Panc1 (cell line): ENCODE measurements at regions of chr15 and their contacts with region 1.

Region 1: DNA sequence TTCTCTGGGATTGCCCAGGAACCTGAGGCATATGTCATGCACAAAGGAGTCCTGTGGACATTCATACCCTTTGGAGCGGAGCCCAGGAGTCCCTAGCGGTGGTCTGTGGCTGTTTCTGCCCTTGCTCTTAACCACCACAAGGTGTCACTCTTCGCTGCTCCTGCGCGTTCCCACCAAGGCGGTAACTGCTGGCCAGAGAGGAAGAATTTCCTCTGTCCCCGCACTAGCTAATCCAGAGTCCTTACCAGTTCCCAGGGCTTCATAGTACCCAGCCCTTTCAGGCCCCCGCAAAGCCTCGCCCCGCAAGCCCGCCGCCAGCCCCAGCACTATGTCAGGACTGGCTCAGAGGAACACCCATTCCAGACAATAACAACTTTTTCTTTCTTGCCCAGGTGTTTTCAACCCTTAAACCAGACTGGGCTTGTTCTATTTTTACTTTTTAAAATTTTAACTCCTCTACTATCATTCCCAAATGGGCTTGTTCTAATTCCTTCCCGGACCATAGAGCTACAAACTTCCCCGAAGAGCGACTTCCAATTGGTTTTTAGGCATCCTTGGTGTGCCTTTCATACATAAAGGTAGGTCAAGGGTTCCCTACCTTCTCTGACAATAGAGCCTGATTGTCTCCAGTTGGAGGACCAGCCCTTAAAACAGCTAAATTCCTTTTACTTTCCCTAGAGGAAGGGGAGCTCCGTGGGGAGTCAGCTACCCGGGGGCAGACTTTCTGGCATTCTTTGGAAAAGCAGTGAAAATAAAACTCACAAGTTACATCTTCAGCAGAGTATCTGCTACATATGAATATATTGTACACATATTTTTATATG is 31.8 kb upstream of the ZNF774 start:
- DNase-seq: peak; percentile 86
- ATAC-seq: peak; percentile 99
- H3K4me3 ChIP-seq: peak overlapping the region; percentile 10 to 36; a peak in 3 of 4 replicates
- H3K27ac ChIP-seq: peak overlapping the region; percentile 79
- H3K4me1 ChIP-seq: peaks cover 14% of the 10 kb centered on the region
- H3K27me3 ChIP-seq: no peaks in the 10 kb centered on the region
- CTCF ChIP-seq: peak; percentile 97

Region 2: DNA sequence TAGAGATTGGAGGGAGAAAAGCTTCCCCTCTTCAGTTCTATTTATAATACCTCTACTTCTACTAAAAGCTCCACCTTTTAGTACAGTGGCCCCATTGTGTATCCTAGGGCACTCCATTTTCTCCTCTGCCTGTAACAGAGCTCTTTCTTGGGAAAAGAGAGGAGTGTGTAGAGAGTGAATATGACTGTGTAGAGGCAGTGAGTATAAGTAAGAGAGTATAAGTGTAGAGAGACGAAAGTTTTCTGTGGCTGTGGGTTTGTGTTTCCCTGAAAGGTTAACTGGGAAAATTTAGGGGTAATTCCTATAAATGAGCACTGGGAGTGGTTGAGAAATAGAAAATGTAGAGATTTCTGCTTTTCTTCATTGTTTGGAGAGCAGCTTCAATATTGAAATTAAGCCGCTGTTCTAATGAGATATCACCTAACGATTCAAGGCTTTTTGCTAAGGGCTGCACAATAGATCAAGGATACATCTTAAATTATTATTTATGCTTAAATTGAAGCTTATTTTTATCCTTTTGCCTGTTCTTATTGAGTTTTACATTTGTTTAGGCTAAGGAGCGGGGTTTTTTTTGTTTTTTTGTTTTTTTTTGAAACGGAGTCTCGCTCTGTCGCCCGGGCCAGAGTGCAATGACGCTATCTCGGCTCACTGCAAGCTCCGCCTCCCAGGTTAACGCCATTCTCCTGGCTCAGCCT is 74.6 kb after region 1 on chr15:
- CTCF ChIA-PET with region 1: interaction called, 3 read pairs
- POLR2A ChIA-PET with region 1: interaction called, 3 read pairs
- in situ Hi-C with region 1: no loop called
- intact Hi-C with region 1: loop called (anchors 10 kb)
- DNase-seq: no peak
- ATAC-seq: peak; percentile 59
- H3K4me3 ChIP-seq: no peak overlapping the region
- H3K27ac ChIP-seq: peak overlapping the region; percentile 83
- H3K4me1 ChIP-seq: peaks cover 69% of the 10 kb centered on the region
- H3K27me3 ChIP-seq: no peaks in the 10 kb centered on the region
- CTCF ChIP-seq: no peak

Region 3: DNA sequence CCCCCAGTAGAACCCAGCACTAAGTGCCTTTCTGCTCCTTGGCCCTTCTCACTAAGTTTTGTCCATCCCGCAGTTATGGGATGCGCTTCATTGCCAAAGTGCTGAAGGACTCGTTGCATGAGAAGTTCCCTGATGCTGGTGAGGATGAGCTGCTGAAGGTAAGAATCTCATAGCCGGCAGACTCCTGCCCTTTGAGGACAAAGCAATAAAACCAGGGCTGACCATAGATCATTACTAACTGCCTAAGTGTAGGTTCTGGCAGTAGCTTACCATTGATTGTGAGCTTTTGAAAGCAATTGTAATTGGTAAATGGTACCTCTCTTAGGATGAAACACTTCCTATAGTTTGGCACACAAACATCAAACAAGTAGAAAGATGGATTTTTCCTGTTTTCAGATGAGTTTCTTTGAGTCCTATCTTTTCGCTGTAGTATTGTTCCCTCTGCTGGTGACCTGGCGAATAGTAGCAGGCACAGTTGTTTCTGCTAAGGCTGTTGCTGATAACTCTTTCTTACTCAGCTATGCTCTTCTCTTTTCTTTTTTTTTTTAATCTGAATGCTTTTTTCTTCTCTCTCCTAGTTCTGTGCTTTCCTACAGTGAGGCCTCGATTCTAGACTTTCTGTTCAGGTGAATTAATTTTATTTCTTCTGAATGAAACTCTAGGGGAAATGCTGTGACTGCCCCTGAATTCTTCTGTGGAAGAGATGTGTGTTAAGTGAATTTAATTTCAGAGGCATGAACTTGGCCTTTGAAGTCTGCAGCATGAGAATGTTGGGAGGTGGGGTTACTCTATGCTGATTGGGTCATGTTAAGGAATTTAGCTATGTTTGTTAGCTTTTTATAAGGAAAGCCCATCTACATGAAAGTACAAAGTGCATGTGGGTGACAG is 162.1 kb after region 1 on chr15:
- CTCF ChIA-PET with region 1: interaction called, 26 read pairs
- POLR2A ChIA-PET with region 1: no interaction called
- in situ Hi-C with region 1: no loop called
- intact Hi-C with region 1: loop called (anchors 1 kb)
- DNase-seq: peak; percentile 18
- ATAC-seq: peak; percentile 62; the same call in 1 of the 2 replicates
- H3K4me3 ChIP-seq: no peak overlapping the region
- H3K27ac ChIP-seq: no peak overlapping the region
- H3K4me1 ChIP-seq: peaks cover 9% of the 10 kb centered on the region; the same call in 1 of the 2 replicates
- H3K27me3 ChIP-seq: no peaks in the 10 kb centered on the region
- CTCF ChIP-seq: peak; percentile 77

Region 4: DNA sequence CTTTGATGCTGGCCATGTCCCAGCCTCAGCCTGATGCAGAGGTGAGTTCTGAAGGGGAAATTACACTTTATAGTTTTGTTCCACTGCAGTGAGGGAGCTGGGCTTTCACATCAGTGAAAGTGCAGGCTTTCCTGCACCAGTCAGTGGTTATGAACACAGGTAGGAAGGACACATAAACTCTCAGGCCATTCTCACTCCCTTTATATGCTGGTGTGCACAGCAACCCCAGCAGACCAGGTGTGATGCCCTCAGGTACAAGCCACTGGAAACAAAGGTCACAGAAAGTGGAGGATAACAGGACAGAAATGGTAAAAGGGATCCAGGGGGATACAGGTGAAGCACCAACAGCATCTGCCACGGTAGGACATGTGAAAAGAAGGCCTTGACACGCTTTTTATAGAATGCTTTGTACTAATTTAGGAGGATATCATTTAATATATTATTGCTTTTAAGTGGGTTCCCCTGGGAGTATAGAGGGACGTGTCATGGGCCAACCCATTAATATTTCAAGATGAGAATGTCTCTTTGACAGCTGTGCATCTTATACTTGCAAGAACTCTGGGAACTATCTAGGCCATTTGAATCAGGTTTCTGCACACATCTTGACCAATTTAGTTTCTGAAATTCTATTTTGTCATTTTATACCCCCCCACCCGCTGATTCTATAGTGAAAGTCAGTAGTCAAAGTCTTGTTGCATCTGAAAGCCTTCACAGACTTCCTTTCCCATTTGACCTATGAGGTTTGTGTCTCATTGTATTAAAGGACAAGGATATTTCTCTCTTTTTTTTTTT is 371.9 kb after region 1 on chr15:
- CTCF ChIA-PET with region 1: no interaction called
- POLR2A ChIA-PET with region 1: no interaction called
- in situ Hi-C with region 1: no loop called
- intact Hi-C with region 1: loop called (anchors 10 kb)
- DNase-seq: no peak
- ATAC-seq: no peak
- H3K4me3 ChIP-seq: no peak overlapping the region
- H3K27ac ChIP-seq: no peak overlapping the region
- H3K4me1 ChIP-seq: no peaks in the 10 kb centered on the region
- H3K27me3 ChIP-seq: no peaks in the 10 kb centered on the region
- CTCF ChIP-seq: no peak